ENCODE measurements at regions of chr1 and their contacts with region 1.

Region 1: DNA sequence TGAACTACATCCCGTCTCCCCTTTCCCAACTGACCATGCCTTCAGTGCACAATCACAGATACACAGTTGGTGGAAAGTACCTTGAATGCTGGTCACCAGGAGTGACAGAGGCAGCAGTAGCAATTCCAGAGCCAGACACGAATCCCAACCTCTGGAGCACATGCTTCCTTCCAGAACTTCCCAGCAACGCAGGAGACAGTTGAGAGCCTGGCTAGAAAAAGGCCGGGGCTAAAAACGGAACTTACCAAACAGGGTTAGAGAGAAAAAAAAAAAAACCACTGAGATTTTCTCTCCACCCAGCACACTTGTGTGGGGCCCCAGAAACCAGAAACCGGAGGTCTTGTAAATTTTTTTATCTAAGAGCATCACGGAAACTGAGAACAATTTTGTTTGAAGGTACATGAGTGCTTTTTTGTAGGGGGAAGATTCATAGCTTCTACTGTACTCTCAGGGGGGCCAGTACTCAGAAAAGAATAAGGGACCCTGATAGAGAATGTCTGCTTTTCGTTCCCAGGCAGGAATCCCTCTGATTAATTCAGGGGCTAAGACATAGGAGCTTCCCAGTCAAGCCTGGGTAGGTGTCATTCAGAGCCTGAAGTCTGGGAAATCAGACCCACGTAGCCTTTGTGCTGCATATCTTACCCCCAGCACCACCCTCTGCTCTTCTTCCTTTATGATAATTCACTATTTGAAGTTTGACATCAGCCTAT is at the start of gene CD48:
- DNase-seq: peak in 7 of 9 experiments; percentile 37 to 89 (median 67)
- ATAC-seq: peak; percentile 32
- H3K4me3 ChIP-seq: peak within 1 kb of the TSS; percentile 84 to 89
- H3K4me3 Mint-ChIP-seq: no peak within 1 kb of the TSS
- H3K27ac ChIP-seq: peak within 1 kb of the TSS; percentile 76 to 93
- H3K27ac Mint-ChIP-seq: no peak within 1 kb of the TSS
- H3K4me1 ChIP-seq: peaks cover 58% of the 10 kb centered on the region
- H3K4me1 Mint-ChIP-seq: peaks cover 46% of the 10 kb centered on the region
- H3K27me3 ChIP-seq: no peaks in the 10 kb centered on the region
- H3K27me3 Mint-ChIP-seq: no peaks in the 10 kb centered on the region
- CTCF ChIP-seq: no peak
- total RNA-seq, gene CD48: 397 to 399 TPM

Region 2: DNA sequence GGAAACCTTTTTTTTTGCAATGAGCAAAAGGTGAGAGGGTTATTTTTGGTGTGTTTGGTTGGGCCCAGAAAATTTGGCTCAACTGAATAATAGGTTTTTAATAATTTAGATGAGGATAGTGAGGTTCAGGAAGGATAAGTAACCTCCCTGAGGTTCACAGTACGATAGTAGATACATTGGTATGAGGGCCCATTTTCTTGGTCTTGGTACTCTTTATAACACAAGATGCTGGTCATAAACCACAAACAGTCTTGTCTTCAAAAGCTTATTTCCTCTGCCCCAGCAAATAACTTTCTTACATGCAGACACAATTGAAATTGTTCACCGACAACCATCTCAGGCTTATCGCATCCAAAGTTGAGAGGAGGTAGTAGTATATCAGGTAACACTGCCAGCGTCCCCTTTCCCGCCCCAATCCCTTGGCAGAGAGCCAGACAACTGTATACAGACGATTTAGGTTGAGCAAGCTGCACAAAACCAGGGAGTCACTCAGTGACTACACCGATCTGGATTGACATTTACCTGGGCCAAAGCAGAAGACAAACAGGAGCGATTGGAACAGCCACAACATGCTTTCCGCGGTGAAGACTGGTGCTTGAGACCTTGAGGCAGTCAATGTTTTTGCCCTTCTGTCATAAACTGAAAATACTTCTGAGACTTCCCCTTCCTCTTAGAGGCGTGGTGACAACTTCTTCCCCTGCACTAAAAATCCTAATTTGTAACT is 189.0 kb before region 1 on chr1 and contains the start of gene SLAMF6:
- CTCF ChIA-PET with region 1: no interaction called
- POLR2A ChIA-PET with region 1: no interaction called
- intact Hi-C with region 1: no loop called
- DNase-seq: peak in 8 of 9 experiments; percentile 25 to 77 (median 47)
- ATAC-seq: peak; percentile 54
- H3K4me3 ChIP-seq: peak within 1 kb of the TSS; percentile 69 to 81
- H3K4me3 Mint-ChIP-seq: peak within 1 kb of the TSS; percentile 91
- H3K27ac ChIP-seq: peak within 1 kb of the TSS; percentile 65 to 74
- H3K27ac Mint-ChIP-seq: peak within 1 kb of the TSS; percentile 95
- H3K4me1 ChIP-seq: peaks cover 39% of the 10 kb centered on the region
- H3K4me1 Mint-ChIP-seq: peaks cover 71% of the 10 kb centered on the region
- H3K27me3 ChIP-seq: no peaks in the 10 kb centered on the region
- H3K27me3 Mint-ChIP-seq: no peaks in the 10 kb centered on the region
- CTCF ChIP-seq: no peak
- total RNA-seq, gene SLAMF6: 4.6 to 5.2 TPM

Region 3: GRCh38 chr1:160629286-160630210 is 82.2 kb before region 1 on chr1:
- CTCF ChIA-PET with region 1: interaction called, 4 read pairs
- POLR2A ChIA-PET with region 1: interaction called, 3 read pairs
- intact Hi-C with region 1: loop called (anchors 1 to 2 kb)
- DNase-seq: peak; percentile 53 to 92 (median 75)
- ATAC-seq: peak; percentile 81
- H3K4me3 ChIP-seq: peak overlapping the region; percentile 19 to 38
- H3K4me3 Mint-ChIP-seq: peak overlapping the region; percentile 76
- H3K27ac ChIP-seq: peak overlapping the region; percentile 91 to 95
- H3K27ac Mint-ChIP-seq: peak overlapping the region; percentile 97
- H3K4me1 ChIP-seq: peaks cover 91% of the 10 kb centered on the region
- H3K4me1 Mint-ChIP-seq: peaks cover 99% of the 10 kb centered on the region
- H3K27me3 ChIP-seq: no peaks in the 10 kb centered on the region
- H3K27me3 Mint-ChIP-seq: no peaks in the 10 kb centered on the region
- CTCF ChIP-seq: no peak

Region 4: DNA sequence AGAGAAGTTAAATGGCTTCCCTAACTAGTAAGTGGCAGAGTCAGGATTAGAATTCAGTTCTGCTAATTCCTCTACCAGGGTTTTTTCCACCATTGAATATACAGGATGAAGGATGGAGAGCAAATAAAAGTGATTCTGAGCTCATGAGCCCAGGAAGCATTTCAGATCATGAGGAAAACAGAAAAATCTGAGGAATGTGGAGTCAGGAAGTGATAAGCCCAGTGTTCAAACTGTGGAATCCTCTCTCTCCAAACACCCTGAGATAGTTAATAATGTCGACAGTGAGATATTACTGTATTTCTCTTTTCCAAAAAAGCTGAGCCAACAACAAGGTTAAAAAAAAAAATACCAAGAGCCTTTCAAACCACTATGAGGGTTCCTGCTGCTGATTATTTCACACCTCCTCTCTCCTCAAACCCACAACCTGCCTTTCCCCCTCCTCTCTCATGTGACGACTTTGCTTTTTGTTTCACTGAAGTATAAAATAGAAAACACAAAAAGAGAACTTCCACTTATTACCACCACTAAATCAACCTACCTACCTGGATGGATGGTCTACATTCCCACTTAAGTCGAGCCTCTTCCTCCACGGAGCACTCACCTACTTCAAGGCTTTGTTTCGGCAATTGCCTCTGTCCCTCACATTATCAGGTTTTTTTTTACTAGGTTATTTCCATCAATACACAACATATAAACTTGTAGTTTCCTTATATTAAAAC is 73.8 kb before region 1 on chr1:
- CTCF ChIA-PET with region 1: interaction called, 3 read pairs
- POLR2A ChIA-PET with region 1: interaction called, 3 read pairs
- intact Hi-C with region 1: loop called in 1 of 2 experiments (anchors 2 kb)
- DNase-seq: peak in 7 of 9 experiments; percentile 39 to 91 (median 62)
- ATAC-seq: peak; percentile 69
- H3K4me3 ChIP-seq: peak overlapping the region; percentile 9 to 18
- H3K4me3 Mint-ChIP-seq: peak overlapping the region; percentile 78
- H3K27ac ChIP-seq: peak overlapping the region; percentile 20 to 69
- H3K27ac Mint-ChIP-seq: peak overlapping the region; percentile 95
- H3K4me1 ChIP-seq: peaks cover 91% of the 10 kb centered on the region
- H3K4me1 Mint-ChIP-seq: peaks cover 96% of the 10 kb centered on the region
- H3K27me3 ChIP-seq: no peaks in the 10 kb centered on the region
- H3K27me3 Mint-ChIP-seq: no peaks in the 10 kb centered on the region
- CTCF ChIP-seq: no peak

Region 5: DNA sequence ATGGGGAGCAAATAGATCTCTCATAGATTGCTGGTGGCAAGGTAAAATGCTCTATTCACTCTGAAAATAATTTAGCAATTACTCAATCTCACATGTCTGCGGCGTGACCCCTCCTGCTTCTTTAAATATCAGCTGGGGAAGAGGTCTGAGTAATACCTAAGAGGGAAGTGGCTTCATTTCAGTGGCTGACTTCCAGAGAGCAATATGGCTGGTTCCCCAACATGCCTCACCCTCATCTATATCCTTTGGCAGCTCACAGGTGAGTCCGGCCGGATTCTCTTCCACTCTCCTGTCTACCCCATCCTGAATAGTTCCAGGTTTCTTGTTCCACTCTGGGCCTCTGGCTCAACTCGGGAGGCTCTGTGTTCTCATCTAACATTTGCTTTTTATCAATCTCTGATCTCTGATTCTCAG is 27.3 kb after region 1 on chr1 and contains the start of gene SLAMF7:
- CTCF ChIA-PET with region 1: interaction called, 3 read pairs
- POLR2A ChIA-PET with region 1: interaction called, 5 read pairs
- intact Hi-C with region 1: loop called in 1 of 2 experiments (anchors 1 kb)
- DNase-seq: peak in 7 of 9 experiments; percentile 24 to 85 (median 57)
- ATAC-seq: peak; percentile 76
- H3K4me3 ChIP-seq: peak within 1 kb of the TSS; percentile 22 to 52
- H3K4me3 Mint-ChIP-seq: peak within 1 kb of the TSS; percentile 84
- H3K27ac ChIP-seq: peak within 1 kb of the TSS in 1 of 2 experiments; percentile 79
- H3K27ac Mint-ChIP-seq: peak within 1 kb of the TSS; percentile 86
- H3K4me1 ChIP-seq: peaks cover 29% of the 10 kb centered on the region
- H3K4me1 Mint-ChIP-seq: peaks cover 58% of the 10 kb centered on the region
- H3K27me3 ChIP-seq: no peaks in the 10 kb centered on the region
- H3K27me3 Mint-ChIP-seq: no peaks in the 10 kb centered on the region
- CTCF ChIP-seq: no peak
- total RNA-seq, gene SLAMF7: 13.3 to 14.8 TPM

Region 6: GRCh38 chr1:160755911-160756848 is 44.4 kb after region 1 on chr1:
- CTCF ChIA-PET with region 1: no interaction called
- POLR2A ChIA-PET with region 1: no interaction called
- intact Hi-C with region 1: no loop called
- DNase-seq: peak in 4 of 9 experiments; percentile 26 to 91 (median 70)
- ATAC-seq: peak; percentile 63
- H3K4me3 ChIP-seq: peak overlapping the region in 1 of 2 experiments; percentile 3
- H3K4me3 Mint-ChIP-seq: peak overlapping the region; percentile 37
- H3K27ac ChIP-seq: peak overlapping the region; percentile 34 to 71
- H3K27ac Mint-ChIP-seq: peak overlapping the region; percentile 94
- H3K4me1 ChIP-seq: peaks cover 31% of the 10 kb centered on the region
- H3K4me1 Mint-ChIP-seq: peaks cover 49% of the 10 kb centered on the region
- H3K27me3 ChIP-seq: no peaks in the 10 kb centered on the region
- H3K27me3 Mint-ChIP-seq: no peaks in the 10 kb centered on the region
- CTCF ChIP-seq: no peak

Region 7: DNA sequence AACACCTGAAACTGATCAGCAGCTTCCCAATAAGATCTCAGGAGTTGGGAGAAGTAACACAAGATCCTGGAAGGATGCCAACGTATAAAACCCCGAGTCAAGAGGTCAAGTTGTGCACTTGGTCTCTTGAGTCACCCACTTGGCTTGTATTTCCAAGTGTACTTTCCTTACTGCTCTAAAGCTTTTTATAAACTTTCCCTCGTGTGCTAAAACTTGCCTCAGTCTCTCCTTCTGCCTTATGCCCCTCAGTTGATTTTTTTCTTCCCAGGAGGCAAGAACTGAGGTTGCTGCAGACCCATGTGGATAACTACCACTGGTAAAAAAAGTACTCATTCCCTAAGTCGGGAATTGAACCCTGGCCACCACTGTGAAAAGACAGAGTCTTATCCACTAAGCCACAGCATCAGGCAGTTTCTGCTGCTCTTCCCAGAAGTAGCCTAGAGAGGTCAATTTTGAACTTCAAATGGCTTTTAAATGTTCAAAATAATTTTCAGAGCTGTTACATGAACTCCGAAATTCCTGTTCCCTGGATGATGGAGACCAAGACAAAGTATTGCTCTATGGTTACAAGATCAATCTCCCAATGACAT is 214.0 kb after region 1 on chr1:
- CTCF ChIA-PET with region 1: no interaction called
- POLR2A ChIA-PET with region 1: no interaction called
- intact Hi-C with region 1: no loop called
- DNase-seq: no peak
- ATAC-seq: no peak
- H3K4me3 ChIP-seq: no peak overlapping the region
- H3K4me3 Mint-ChIP-seq: no peak overlapping the region
- H3K27ac ChIP-seq: no peak overlapping the region
- H3K27ac Mint-ChIP-seq: no peak overlapping the region
- H3K4me1 ChIP-seq: no peaks in the 10 kb centered on the region
- H3K4me1 Mint-ChIP-seq: no peaks in the 10 kb centered on the region
- H3K27me3 ChIP-seq: no peaks in the 10 kb centered on the region
- H3K27me3 Mint-ChIP-seq: no peaks in the 10 kb centered on the region
- CTCF ChIP-seq: no peak

Region 8: GRCh38 chr1:161031874-161032273 is 320.1 kb after region 1 on chr1:
- CTCF ChIA-PET with region 1: no interaction called
- POLR2A ChIA-PET with region 1: no interaction called
- intact Hi-C with region 1: no loop called
- DNase-seq: no peak
- ATAC-seq: no peak
- H3K4me3 ChIP-seq: no peak overlapping the region
- H3K4me3 Mint-ChIP-seq: no peak overlapping the region
- H3K27ac ChIP-seq: no peak overlapping the region
- H3K27ac Mint-ChIP-seq: no peak overlapping the region
- H3K4me1 ChIP-seq: peaks cover 3% of the 10 kb centered on the region
- H3K4me1 Mint-ChIP-seq: peaks cover 12% of the 10 kb centered on the region
- H3K27me3 ChIP-seq: no peaks in the 10 kb centered on the region
- H3K27me3 Mint-ChIP-seq: no peaks in the 10 kb centered on the region
- CTCF ChIP-seq: no peak

Measured in CD8-positive, alpha-beta T cell (primary cell).